ENCODE measurements at regions of chr2 and their contacts with region 1.

Region 1: GRCh38 chr2:218995972-218996711 is 2.9 kb upstream of the CRYBA2 start:
- DNase-seq: peak; percentile 53 to 66
- ATAC-seq: peak; percentile 65 to 83
- H3K4me3 ChIP-seq: peak overlapping the region; percentile 39 to 53 (median 51)
- H3K27ac ChIP-seq: peak overlapping the region in 2 of 4 donors; percentile 62 to 81
- H3K4me1 ChIP-seq: peaks cover 10 to 18% of the 10 kb centered on the region in 2 donors
- H3K27me3 ChIP-seq: peaks cover 48 to 64% (median 54%) of the 10 kb centered on the region in 3 donors
- CTCF ChIP-seq: peak; percentile 59 to 96 (median 87)
- POLR2A ChIP-seq: peak; percentile 68 to 86

Region 2: DNA sequence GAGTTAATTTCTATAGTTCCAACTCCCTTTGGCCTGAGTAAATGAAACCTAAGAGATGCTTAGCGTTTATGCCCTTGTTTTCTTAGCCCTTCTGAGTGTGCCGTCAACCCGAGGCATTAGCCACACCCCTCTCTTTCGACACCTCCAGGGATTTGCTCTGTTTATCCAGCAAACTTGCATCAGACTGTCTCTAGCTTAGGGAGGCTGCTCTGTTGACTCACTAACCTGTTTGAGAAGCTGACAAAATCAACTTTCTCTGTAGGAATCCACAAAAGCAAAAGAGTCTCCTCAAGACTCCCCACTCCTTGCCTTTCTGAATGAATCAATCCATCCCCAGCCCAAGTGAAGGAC is 1310.9 kb before region 1 on chr2:
- in situ Hi-C with region 1: no loop called
- intact Hi-C with region 1: no loop called
- DNase-seq: peak; percentile 59 to 78
- ATAC-seq: peak; percentile 86 to 95
- H3K4me3 ChIP-seq: no peak overlapping the region
- H3K27ac ChIP-seq: peak overlapping the region; percentile 30 to 73 (median 53)
- H3K4me1 ChIP-seq: peaks cover 5 to 11% of the 10 kb centered on the region in 2 donors
- H3K27me3 ChIP-seq: no peaks in the 10 kb centered on the region
- CTCF ChIP-seq: no peak
- POLR2A ChIP-seq: peak in 1 of 2 donors; percentile 36

Region 3: GRCh38 chr2:219029829-219030165 is 33.7 kb after region 1 on chr2:
- in situ Hi-C with region 1: no loop called
- intact Hi-C with region 1: no loop called
- DNase-seq: peak; percentile 36 to 65
- ATAC-seq: peak; percentile 83 to 87
- H3K4me3 ChIP-seq: no peak overlapping the region
- H3K27ac ChIP-seq: no peak overlapping the region
- H3K4me1 ChIP-seq: no peaks in the 10 kb centered on the region
- H3K27me3 ChIP-seq: peaks cover 0 to 12% (median 9%) of the 10 kb centered on the region in 3 donors
- CTCF ChIP-seq: peak; percentile 64 to 97 (median 90)
- POLR2A ChIP-seq: no peak

Region 4: DNA sequence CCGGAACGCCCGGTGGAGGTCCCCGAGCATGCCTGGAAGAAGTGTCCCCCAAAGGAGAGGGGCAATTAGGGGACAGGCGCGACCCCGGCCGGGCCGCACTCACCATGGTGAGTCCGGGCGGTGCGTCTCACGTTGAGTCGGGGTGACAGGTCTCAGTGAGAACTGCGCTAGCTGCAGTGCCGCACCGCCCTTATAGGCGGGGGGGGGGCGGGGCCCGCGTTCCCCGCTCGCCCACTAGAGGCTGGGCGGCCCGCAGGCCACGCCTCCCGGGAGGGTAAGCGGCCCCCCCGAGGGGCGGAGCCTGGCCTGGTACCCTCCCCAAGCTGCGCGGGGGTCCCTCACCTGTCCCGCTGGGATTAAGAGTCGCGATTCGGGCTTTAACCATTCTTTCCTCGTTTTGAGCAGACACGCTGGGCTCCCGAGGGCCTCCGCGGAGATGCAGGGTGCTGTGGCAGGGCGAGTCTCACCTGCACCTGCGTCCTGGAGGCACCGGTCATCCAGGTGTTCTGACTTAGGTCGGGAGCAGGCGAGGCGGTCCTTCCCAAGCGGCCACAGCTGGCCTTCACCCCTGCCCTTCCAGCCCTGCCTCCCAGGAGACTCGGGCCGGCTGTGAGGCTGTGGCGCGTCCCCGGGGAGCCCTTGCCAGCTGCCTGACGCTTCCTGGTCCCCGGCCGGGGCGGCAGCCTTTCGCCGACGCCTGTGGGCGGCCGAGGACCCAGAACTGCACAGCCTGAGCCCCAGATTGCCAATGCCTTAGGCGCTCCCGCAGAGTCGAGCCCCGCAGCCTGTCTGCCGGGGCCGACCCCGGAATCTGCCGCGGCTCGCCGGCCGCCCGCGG is 257.8 kb after region 1 on chr2 and contains the start of gene TUBA4A:
- in situ Hi-C with region 1: no loop called
- intact Hi-C with region 1: loop called (anchors 5 kb)
- DNase-seq: peak; percentile 76 to 88
- ATAC-seq: peak; percentile 69 to 72
- H3K4me3 ChIP-seq: peak within 1 kb of the TSS; percentile 68 to 88 (median 76)
- H3K27ac ChIP-seq: peak within 1 kb of the TSS; percentile 91 to 99 (median 96)
- H3K4me1 ChIP-seq: peaks cover 36 to 53% of the 10 kb centered on the region in 2 donors
- H3K27me3 ChIP-seq: no peaks in the 10 kb centered on the region
- CTCF ChIP-seq: peak in 3 of 5 experiments; percentile 23 to 34 (median 30)
- POLR2A ChIP-seq: peak; percentile 98
- total RNA-seq, gene TUBA4A: 351 to 797 (median 386) TPM

Region 5: GRCh38 chr2:219294356-219295351 is 298.5 kb after region 1 on chr2:
- in situ Hi-C with region 1: no loop called
- intact Hi-C with region 1: loop called (anchors 10 kb)
- DNase-seq: peak; percentile 64 to 80
- ATAC-seq: peak; percentile 85 to 86
- H3K4me3 ChIP-seq: peak overlapping the region; percentile 57 to 63 (median 58)
- H3K27ac ChIP-seq: peak overlapping the region; percentile 68 to 82 (median 77)
- H3K4me1 ChIP-seq: peaks cover 8 to 10% of the 10 kb centered on the region in 2 donors
- H3K27me3 ChIP-seq: no peaks in the 10 kb centered on the region
- CTCF ChIP-seq: peak; percentile 95 to 99 (median 98)
- POLR2A ChIP-seq: peak in 1 of 2 donors; percentile 30